Right ventricle myocardium superior (tissue), 1 donor: ENCODE measurements at regions of chr2 and their contacts with region 1.

Region 1: DNA sequence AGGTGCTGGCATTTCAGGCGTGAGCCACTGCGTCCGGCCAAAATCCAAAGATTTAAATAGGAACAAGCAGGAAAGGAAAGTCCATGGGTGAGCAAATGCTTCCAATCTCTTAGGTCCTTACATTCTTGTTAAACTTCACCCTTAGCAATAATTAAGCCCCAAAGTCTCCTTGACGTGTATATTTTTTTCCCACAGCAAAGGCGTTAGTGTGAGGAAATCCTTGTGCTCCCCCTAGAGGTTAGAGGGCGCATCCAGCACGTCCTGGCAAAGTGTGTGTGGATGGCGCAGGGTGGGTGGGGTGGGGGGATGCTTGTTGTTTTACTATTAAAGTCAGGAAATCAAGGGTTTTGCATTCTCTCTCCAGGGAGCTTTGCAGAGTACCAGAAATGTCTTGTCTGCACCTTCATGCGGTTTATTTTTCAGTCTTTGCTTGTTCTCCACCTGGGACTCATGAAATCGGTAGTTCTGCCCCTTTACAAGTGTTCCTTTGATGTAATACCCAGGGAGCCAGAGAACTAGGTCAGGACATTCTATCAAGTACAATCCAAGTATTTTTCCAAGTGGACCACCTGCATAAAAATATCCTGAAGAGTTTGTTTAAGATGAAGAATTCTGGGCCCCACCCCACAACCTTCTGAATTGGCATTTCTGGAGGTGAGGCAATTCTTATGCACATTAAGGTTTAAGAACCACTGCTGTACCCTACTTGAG is 22.2 kb upstream of the ITSN2 start:
- DNase-seq: peak; percentile 66
- ATAC-seq: peak; percentile 93

Region 2: GRCh38 chr2:24199968-24200590 is 182.4 kb before region 1 on chr2:
- intact Hi-C with region 1: no loop called
- DNase-seq: no peak
- ATAC-seq: peak; percentile 82

Region 3: DNA sequence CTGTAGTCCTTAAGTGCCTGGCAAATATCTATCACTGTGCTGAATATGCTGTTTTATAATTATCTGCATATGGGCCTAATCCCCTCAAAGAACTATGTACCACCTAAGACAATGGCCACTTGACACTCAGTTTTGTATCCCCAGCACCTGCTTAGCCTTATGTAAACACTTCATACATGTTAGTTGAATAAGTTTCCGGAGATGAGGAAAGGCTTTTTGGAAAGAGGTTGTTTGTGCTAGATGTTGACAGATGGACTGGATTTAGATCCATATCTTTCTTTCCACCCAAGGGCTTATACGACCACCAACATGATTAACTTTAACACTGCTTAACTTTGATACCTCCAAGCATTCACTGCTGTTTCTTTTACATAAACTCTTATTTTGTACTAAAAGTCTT is 144.4 kb before region 1 on chr2:
- intact Hi-C with region 1: loop called (anchors 5 kb)
- DNase-seq: no peak
- ATAC-seq: no peak